Right ventricle myocardium inferior (tissue), 1 donor: ENCODE measurements at regions of chr18 and their contacts with region 1.

Region 1: GRCh38 chr18:62324917-62325805 is at the start of gene TNFRSF11A:
- DNase-seq: no peak
- ATAC-seq: peak; percentile 57
- total RNA-seq, gene TNFRSF11A: 1.1 TPM

Region 2: GRCh38 chr18:62281684-62282083 is 43.5 kb before region 1 on chr18:
- intact Hi-C with region 1: loop called (anchors 5 kb)
- DNase-seq: no peak
- ATAC-seq: no peak